IMR-90 (cell line): ENCODE measurements at regions of chr5 and their contacts with region 1.

Region 1: DNA sequence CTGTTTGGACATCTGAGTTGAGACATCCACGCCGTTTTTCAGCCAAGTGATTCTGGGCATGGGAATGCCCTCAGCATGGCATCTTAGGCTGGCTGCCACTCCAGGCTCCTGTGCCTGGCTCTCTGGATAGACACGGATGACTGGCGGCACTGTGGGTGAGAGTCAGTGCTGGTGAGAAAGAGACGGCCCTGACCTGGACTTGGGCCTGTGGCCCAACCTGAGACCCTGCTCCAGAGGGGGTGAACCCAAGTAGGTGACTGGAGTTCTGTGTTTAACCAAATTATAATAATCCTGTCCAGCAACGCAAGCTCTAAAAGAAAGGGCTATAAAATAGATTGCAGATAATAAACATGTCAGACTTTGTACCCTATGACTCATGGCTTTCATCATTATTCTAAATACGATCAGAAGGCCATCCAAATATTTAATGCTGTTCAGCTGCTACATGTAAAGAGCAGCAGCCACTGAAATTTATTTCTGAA is 173.9 kb downstream of the HSPA4 start:
- DNase-seq: peak; percentile 70
- ATAC-seq: peak; percentile 54
- H3K4me3 ChIP-seq: no peak overlapping the region
- H3K27ac ChIP-seq: peak overlapping the region; percentile 63; the same call in 1 of the 2 replicates
- H3K4me1 ChIP-seq: peaks cover 24% of the 10 kb centered on the region
- H3K27me3 ChIP-seq: no peaks in the 10 kb centered on the region
- CTCF ChIP-seq: no peak
- POLR2A ChIP-seq: no peak
- RAD21 ChIP-seq: no peak

Region 2: DNA sequence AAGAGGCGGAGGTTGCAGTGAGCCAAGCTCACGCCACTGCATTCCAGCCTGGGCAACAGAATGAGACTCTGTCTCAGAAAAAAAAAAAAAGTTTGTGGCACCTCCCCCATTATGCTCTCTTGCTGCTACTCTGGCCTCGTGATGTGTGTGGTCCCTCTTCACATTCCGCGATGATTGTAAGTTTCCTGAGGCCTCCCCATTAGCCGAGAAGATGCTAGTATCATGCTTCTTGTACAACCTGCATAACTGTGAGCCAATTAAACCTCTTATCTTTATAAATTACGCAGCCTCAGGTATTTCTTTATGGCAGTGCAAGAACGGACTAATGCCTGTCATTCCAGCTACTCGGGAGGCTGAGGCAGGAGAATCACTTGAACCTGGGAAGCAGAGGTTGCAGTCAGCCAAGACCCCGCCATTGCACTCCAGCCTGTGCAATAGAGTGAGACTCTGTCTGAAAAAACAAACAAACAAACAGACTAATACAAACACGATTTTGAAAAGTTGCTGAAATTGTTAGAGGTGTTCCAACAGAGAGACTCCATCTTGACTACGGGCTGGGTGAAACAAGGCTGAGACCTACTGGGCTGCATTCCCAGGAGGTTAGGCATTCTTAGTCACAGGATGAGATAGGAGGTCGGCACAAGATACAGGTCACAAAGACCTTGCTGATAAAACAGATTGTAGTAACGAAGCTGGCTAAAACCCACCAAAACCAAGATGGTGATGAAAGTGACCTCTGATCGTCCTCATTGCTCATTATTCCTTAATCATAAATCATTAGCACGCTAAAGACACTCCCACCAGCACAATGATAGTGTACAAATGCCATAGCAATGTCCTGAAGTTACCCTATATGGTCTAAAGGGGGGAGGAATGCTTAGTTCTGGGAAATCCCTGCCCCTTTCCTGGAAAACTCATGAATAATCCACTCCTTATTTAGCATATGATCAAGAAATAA is 254.0 kb before region 1 on chr5:
- CTCF ChIA-PET with region 1: no interaction called
- POLR2A ChIA-PET with region 1: no interaction called
- dilution Hi-C with region 1: no loop called
- in situ Hi-C with region 1: no loop called
- intact Hi-C with region 1: no loop called
- DNase-seq: peak; percentile 21
- ATAC-seq: peak; percentile 66
- H3K4me3 ChIP-seq: no peak overlapping the region
- H3K27ac ChIP-seq: no peak overlapping the region
- H3K4me1 ChIP-seq: peaks cover 2% of the 10 kb centered on the region; the same call in 1 of the 2 replicates
- H3K27me3 ChIP-seq: no peaks in the 10 kb centered on the region
- CTCF ChIP-seq: no peak
- POLR2A ChIP-seq: no peak
- RAD21 ChIP-seq: no peak

Region 3: GRCh38 chr5:133032852-133033742 is 192.6 kb before region 1 on chr5:
- CTCF ChIA-PET with region 1: no interaction called
- POLR2A ChIA-PET with region 1: no interaction called
- dilution Hi-C with region 1: no loop called
- in situ Hi-C with region 1: no loop called
- intact Hi-C with region 1: no loop called
- DNase-seq: no peak
- ATAC-seq: peak; percentile 27
- H3K4me3 ChIP-seq: no peak overlapping the region
- H3K27ac ChIP-seq: no peak overlapping the region
- H3K4me1 ChIP-seq: no peaks in the 10 kb centered on the region
- H3K27me3 ChIP-seq: no peaks in the 10 kb centered on the region
- CTCF ChIP-seq: no peak
- POLR2A ChIP-seq: no peak
- RAD21 ChIP-seq: no peak

Region 4: DNA sequence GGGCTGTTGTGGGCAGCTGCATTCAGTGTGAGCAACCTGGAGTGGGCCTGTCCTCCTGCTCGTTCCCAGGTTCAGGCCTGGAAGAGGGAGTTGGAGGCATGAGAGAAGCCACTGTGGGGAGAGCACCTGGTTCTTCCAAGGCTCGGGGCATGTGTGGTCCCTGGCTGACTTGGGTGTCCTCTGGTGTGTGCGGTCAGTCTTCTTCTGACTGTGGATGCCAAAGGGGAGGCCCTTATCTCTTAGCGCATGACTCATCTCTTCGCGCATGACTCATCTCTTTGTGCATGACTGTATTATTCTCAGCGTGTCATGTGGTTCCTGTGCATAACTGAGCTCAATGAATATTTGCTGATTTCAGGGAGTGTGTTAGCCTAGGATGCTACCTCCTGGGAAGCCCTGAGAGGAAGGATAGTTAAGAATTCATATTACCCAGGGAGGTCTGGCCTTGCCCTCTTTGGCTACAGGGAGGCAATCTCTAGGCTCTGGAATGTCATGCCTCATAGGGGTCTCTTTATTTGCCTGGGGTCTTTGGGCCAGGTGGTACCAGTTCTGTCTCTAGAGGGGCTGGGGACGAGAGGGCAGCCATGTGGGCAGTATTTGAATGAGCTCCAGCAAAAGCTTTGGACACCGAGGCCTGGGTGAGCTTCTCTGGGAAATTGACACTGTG is 14.8 kb after region 1 on chr5:
- CTCF ChIA-PET with region 1: interaction called, 3 read pairs
- POLR2A ChIA-PET with region 1: no interaction called
- dilution Hi-C with region 1: no loop called
- in situ Hi-C with region 1: no loop called
- intact Hi-C with region 1: loop called (anchors 2 kb)
- DNase-seq: peak; percentile 99
- ATAC-seq: peak; percentile 89
- H3K4me3 ChIP-seq: no peak overlapping the region
- H3K27ac ChIP-seq: peak overlapping the region; percentile 27; the same call in 1 of the 2 replicates
- H3K4me1 ChIP-seq: peaks cover 17% of the 10 kb centered on the region; the same call in 1 of the 2 replicates
- H3K27me3 ChIP-seq: 0 out of 2 replicates have a peak, but pooled peaks cover 2% of the 10 kb centered on the region
- CTCF ChIP-seq: no peak
- POLR2A ChIP-seq: no peak
- RAD21 ChIP-seq: no peak

Region 5: GRCh38 chr5:133423618-133424282 is 198.0 kb after region 1 on chr5:
- CTCF ChIA-PET with region 1: no interaction called
- POLR2A ChIA-PET with region 1: no interaction called
- dilution Hi-C with region 1: no loop called
- in situ Hi-C with region 1: no loop called
- intact Hi-C with region 1: no loop called
- DNase-seq: peak; percentile 12
- ATAC-seq: peak; percentile 91
- H3K4me3 ChIP-seq: no peak overlapping the region
- H3K27ac ChIP-seq: no peak overlapping the region
- H3K4me1 ChIP-seq: no peaks in the 10 kb centered on the region
- H3K27me3 ChIP-seq: peaks cover 8% of the 10 kb centered on the region
- CTCF ChIP-seq: peak; percentile 65
- POLR2A ChIP-seq: no peak
- RAD21 ChIP-seq: peak; percentile 47; the same call in 1 of the 2 replicates